ENCODE measurements at regions of chr19 and their contacts with region 1.

Region 1: GRCh38 chr19:43532962-43533545 is at the start of gene ZNF575:
- DNase-seq: peak; percentile 96
- ATAC-seq: peak; percentile 68
- H3K4me3 Mint-ChIP-seq: peak within 1 kb of the TSS; percentile 95
- H3K27ac Mint-ChIP-seq: peak within 1 kb of the TSS; percentile 100
- H3K4me1 Mint-ChIP-seq: peaks cover 18% of the 10 kb centered on the region
- H3K27me3 Mint-ChIP-seq: peaks cover 25% of the 10 kb centered on the region
- CTCF ChIP-seq: peak; percentile 16; the same call in 1 of the 2 replicates
- total RNA-seq, gene ZNF575: 0.13 to 0.25 TPM in 2 of 3 replicates, not detected in the other

Region 2: GRCh38 chr19:43446746-43447489 is 86.1 kb before region 1 on chr19:
- CTCF ChIA-PET with region 1: interaction called, 27 read pairs
- POLR2A ChIA-PET with region 1: interaction called, 3 read pairs
- DNase-seq: peak; percentile 84
- ATAC-seq: peak; percentile 92
- H3K4me3 Mint-ChIP-seq: peak overlapping the region; percentile 34; the same call in 1 of the 2 replicates
- H3K27ac Mint-ChIP-seq: 0 out of 2 replicates have a peak overlapping the region, but pooled peaks have one; percentile 5
- H3K4me1 Mint-ChIP-seq: peaks cover 10% of the 10 kb centered on the region
- H3K27me3 Mint-ChIP-seq: peaks cover 7% of the 10 kb centered on the region; the same call in 1 of the 2 replicates
- CTCF ChIP-seq: peak; percentile 91

Region 3: GRCh38 chr19:43503501-43504425 is 29.3 kb before region 1 on chr19:
- CTCF ChIA-PET with region 1: interaction called, 16 read pairs
- POLR2A ChIA-PET with region 1: no interaction called
- DNase-seq: peak; percentile 97
- ATAC-seq: peak; percentile 89
- H3K4me3 Mint-ChIP-seq: peak overlapping the region; percentile 91
- H3K27ac Mint-ChIP-seq: peak overlapping the region; percentile 74
- H3K4me1 Mint-ChIP-seq: peaks cover 21% of the 10 kb centered on the region
- H3K27me3 Mint-ChIP-seq: peaks cover 38% of the 10 kb centered on the region
- CTCF ChIP-seq: peak; percentile 25; the same call in 1 of the 2 replicates

Region 4: GRCh38 chr19:43570174-43570791 is 37.2 kb after region 1 on chr19:
- CTCF ChIA-PET with region 1: interaction called, 14 read pairs
- POLR2A ChIA-PET with region 1: no interaction called
- DNase-seq: no peak
- ATAC-seq: peak; percentile 48
- H3K4me3 Mint-ChIP-seq: no peak overlapping the region
- H3K27ac Mint-ChIP-seq: peak overlapping the region; percentile 74
- H3K4me1 Mint-ChIP-seq: peaks cover 12% of the 10 kb centered on the region
- H3K27me3 Mint-ChIP-seq: no peaks in the 10 kb centered on the region
- CTCF ChIP-seq: no peak

Region 5: DNA sequence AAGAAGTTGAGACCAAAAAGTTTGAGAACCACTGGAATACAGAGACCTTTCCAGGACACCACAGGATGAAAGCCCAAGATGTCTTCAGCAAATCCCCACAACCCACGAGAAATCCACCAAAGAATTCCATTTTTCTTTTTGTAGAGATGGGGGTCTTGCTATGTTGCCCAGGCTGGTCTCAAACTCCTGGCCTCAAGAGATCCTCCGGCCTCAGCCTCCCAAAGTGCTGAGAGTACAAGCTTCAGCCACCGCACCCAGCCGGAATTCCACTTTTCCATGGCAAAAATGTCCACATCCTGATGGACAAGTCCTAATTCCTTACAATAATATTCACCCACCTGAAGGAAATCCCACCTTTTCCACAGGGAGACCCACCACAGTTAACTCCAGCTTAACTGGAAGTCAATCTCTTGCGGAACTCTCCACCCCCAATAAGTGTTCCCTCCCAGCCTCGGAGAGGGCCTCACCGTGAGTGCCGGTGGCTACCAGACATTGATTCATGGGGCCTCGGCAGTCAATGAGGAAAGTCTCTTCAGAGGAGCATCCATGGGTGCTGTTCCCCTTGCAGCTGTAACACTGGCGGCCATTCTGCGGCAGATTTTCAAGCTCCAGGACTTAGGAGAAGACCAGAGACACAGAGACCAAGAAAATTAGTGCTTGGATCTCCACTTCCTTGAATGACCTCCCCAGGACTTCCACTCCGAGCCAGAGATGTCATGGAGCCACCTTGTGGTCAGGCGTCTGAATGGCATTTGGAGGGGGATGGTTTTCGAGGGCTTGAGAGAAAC is 118.9 kb after region 1 on chr19:
- CTCF ChIA-PET with region 1: interaction called, 15 read pairs
- POLR2A ChIA-PET with region 1: no interaction called
- DNase-seq: peak; percentile 74
- ATAC-seq: peak; percentile 88
- H3K4me3 Mint-ChIP-seq: no peak overlapping the region
- H3K27ac Mint-ChIP-seq: 0 out of 2 replicates have a peak overlapping the region, but pooled peaks have one; percentile 78
- H3K4me1 Mint-ChIP-seq: peaks cover 2% of the 10 kb centered on the region; the same call in 1 of the 2 replicates
- H3K27me3 Mint-ChIP-seq: peaks cover 2% of the 10 kb centered on the region; the same call in 1 of the 2 replicates
- CTCF ChIP-seq: peak; percentile 62

Measured in WTC11 (cell line).